Panc1 (cell line): ENCODE measurements at regions of chr6 and their contacts with region 1.

Region 1: DNA sequence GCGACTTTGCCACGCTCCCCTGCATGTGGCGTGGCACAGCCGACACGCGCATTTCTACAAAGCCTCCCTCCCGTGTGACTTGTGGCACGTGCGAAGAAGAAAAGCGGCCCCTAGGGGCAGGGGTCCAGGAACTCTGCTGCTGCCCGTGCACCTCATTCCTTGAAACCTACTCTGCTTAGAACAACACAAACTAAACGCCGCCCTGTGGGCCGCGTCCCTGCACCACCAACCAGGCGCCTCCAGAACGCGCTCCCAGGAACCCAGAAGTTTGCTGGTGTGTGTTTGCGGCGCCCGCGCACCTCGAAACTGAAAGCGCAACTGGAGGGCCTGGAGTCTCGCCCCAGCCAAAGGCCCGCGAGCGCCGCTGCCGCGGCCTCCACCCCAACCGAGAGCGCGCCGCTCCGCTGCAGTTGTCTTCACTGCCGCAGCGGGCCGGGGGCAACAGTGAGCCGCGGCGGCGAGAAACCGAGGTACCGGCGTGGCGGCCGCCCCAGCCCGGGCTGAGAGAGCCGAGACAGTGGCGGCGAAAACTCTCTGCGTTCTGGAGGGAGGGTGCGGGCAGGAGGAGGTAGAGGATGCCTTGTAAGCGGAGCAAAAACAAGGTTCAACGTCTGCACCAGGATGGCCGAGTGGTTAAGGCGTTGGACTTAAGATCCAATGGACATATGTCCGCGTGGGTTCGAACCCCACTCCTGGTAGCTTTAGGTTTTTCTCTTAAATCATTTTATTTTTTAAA is 65.8 kb downstream of the STX11 start:
- DNase-seq: peak; percentile 97
- ATAC-seq: peak; percentile 96
- H3K4me3 ChIP-seq: peak overlapping the region; percentile 69 to 84
- H3K27ac ChIP-seq: peak overlapping the region; percentile 84
- H3K4me1 ChIP-seq: peaks cover 14% of the 10 kb centered on the region
- H3K27me3 ChIP-seq: no peaks in the 10 kb centered on the region
- CTCF ChIP-seq: peak; percentile 95

Region 2: GRCh38 chr6:144104898-144105487 is 111.1 kb before region 1 on chr6:
- CTCF ChIA-PET with region 1: interaction called, 4 read pairs
- POLR2A ChIA-PET with region 1: no interaction called
- in situ Hi-C with region 1: no loop called
- intact Hi-C with region 1: loop called (anchors 2 kb)
- DNase-seq: peak; percentile 70
- ATAC-seq: peak; percentile 89
- H3K4me3 ChIP-seq: no peak overlapping the region
- H3K27ac ChIP-seq: no peak overlapping the region
- H3K4me1 ChIP-seq: no peaks in the 10 kb centered on the region
- H3K27me3 ChIP-seq: no peaks in the 10 kb centered on the region
- CTCF ChIP-seq: peak; percentile 72; the same call in 1 of the 2 replicates

Region 3: DNA sequence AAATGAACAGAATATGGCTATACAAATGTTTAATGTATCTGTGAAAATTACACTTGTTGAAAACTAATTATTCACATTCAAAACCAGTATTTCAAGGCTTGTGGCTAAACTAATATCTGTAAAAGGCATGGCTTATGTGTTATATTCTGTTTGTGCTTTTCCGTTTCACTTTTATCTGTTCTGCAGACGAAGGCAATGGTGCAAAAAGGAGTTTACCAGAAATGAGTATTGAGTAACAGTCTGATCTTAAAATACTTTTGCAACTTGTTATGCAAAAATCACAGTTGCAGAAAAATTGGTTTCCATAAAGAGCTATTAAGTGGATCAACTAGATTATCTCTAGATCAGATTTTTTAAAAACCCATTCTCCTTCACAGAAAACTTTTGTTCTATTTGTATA is 75.2 kb before region 1 on chr6:
- CTCF ChIA-PET with region 1: no interaction called
- POLR2A ChIA-PET with region 1: no interaction called
- in situ Hi-C with region 1: no loop called
- intact Hi-C with region 1: no loop called
- DNase-seq: no peak
- ATAC-seq: no peak
- H3K4me3 ChIP-seq: no peak overlapping the region
- H3K27ac ChIP-seq: no peak overlapping the region
- H3K4me1 ChIP-seq: no peaks in the 10 kb centered on the region
- H3K27me3 ChIP-seq: no peaks in the 10 kb centered on the region
- CTCF ChIP-seq: no peak

Region 4: GRCh38 chr6:144434308-144434990 is 218.3 kb after region 1 on chr6:
- CTCF ChIA-PET with region 1: no interaction called
- POLR2A ChIA-PET with region 1: no interaction called
- in situ Hi-C with region 1: no loop called
- intact Hi-C with region 1: no loop called
- DNase-seq: no peak
- ATAC-seq: peak; percentile 65
- H3K4me3 ChIP-seq: no peak overlapping the region
- H3K27ac ChIP-seq: no peak overlapping the region
- H3K4me1 ChIP-seq: 0 out of 2 replicates have a peak, but pooled peaks cover 3% of the 10 kb centered on the region
- H3K27me3 ChIP-seq: no peaks in the 10 kb centered on the region
- CTCF ChIP-seq: no peak

Region 5: DNA sequence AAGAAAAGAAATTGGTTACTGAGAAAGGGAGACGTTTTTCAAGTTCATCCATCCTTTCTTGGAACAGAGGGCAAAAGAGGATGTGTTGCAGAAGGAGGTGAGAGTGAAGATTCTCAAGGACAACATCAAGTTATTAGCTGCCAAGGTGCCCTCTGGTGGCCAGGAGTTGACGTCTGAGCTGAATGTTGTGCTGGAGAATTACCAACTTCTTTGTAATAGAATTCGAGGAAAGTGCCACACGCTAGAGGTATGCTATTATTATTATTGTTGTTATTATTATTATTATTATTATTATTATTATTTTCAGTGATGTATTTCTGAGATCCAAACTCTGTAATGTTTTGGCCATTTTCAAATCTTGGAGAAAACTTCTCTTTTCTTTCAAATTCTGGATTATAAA is 266.0 kb after region 1 on chr6:
- CTCF ChIA-PET with region 1: no interaction called
- POLR2A ChIA-PET with region 1: no interaction called
- in situ Hi-C with region 1: no loop called
- intact Hi-C with region 1: loop called (anchors 5 kb)
- DNase-seq: peak; percentile 77
- ATAC-seq: peak; percentile 93
- H3K4me3 ChIP-seq: no peak overlapping the region
- H3K27ac ChIP-seq: no peak overlapping the region
- H3K4me1 ChIP-seq: no peaks in the 10 kb centered on the region
- H3K27me3 ChIP-seq: no peaks in the 10 kb centered on the region
- CTCF ChIP-seq: peak; percentile 78